GM12878 (cell line): ENCODE measurements at regions of chr3 and their contacts with region 1.

Region 1: GRCh38 chr3:87298111-87298718 is 21.8 kb upstream of the POU1F1 start:
- DNase-seq: no peak
- ATAC-seq: peak; percentile 88
- H3K4me3 ChIP-seq: no peak overlapping the region
- H3K27ac ChIP-seq: no peak overlapping the region
- H3K4me1 ChIP-seq: no peaks in the 10 kb centered on the region
- H3K27me3 ChIP-seq: no peaks in the 10 kb centered on the region
- CTCF ChIP-seq: peak; percentile 52 to 59 (median 58); a peak in 5 of 6 replicates
- EP300 ChIP-seq: no peak
- POLR2A ChIP-seq: no peak
- RAD21 ChIP-seq: peak; percentile 67

Region 2: GRCh38 chr3:87287011-87287410 is 11.2 kb before region 1 on chr3:
- CTCF ChIA-PET with region 1: interaction called, 17 read pairs
- POLR2A ChIA-PET with region 1: no interaction called
- RAD21 ChIA-PET with region 1: no interaction called
- SMC1A ChIA-PET with region 1: interaction called, 4 read pairs
- in situ Hi-C with region 1: no loop called
- intact Hi-C with region 1: no loop called
- DNase-seq: no peak
- ATAC-seq: peak; percentile 51
- H3K4me3 ChIP-seq: no peak overlapping the region
- H3K27ac ChIP-seq: no peak overlapping the region
- H3K4me1 ChIP-seq: no peaks in the 10 kb centered on the region
- H3K27me3 ChIP-seq: no peaks in the 10 kb centered on the region
- CTCF ChIP-seq: no peak
- EP300 ChIP-seq: no peak
- POLR2A ChIP-seq: no peak
- RAD21 ChIP-seq: no peak

Region 3: DNA sequence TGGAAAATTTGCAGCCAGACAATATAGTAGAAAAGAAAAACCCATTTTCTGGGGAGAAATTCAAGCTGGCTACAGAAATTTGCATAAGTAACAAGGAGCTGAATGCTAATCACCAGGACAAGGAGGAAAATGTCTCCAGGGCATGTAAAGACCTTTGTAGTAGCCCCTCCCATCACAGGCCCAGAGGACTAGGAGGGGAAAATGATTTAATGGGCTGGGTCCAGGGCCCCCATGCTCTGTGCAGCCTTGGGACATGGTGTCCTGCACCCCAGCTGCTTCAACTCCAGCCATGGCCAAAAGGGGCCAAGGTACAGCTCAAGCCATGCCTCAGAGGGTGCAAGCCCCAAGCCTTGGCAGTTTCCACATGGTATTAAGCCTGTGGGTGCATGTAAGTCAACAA is 175.7 kb after region 1 on chr3:
- CTCF ChIA-PET with region 1: no interaction called
- POLR2A ChIA-PET with region 1: no interaction called
- RAD21 ChIA-PET with region 1: no interaction called
- SMC1A ChIA-PET with region 1: no interaction called
- in situ Hi-C with region 1: no loop called
- intact Hi-C with region 1: no loop called
- DNase-seq: no peak
- ATAC-seq: no peak
- H3K4me3 ChIP-seq: no peak overlapping the region
- H3K27ac ChIP-seq: no peak overlapping the region
- H3K4me1 ChIP-seq: no peaks in the 10 kb centered on the region
- H3K27me3 ChIP-seq: no peaks in the 10 kb centered on the region
- CTCF ChIP-seq: no peak
- EP300 ChIP-seq: no peak
- POLR2A ChIP-seq: no peak
- RAD21 ChIP-seq: no peak

Region 4: DNA sequence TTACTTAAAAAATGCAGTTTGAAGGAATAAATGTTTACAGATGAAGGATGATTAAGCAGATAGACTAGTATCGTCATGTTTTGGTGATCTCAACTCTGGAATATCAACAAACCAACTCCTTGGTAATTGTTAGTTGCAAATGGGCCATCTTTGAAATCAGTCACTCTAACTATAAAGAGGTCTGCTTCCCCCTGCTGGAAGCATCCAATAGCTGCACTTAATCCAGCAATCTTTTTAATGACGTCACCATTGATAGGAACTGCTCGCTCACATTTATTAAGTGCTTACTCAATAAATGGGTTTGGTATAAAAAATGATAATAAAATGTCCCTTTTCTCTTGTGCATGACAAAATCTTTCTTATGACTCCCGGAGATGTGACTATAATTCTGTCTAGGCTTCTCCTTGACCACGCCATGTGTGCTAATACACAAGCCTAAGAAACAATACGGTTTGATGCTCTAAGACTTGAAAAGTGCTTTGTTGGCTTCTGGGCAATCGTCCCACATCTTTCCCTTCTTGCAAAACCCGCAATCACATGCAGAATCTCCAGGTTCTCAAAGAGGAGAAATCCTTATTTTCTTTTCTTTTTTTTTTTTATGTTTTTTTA is 205.8 kb after region 1 on chr3:
- CTCF ChIA-PET with region 1: interaction called, 8 read pairs
- POLR2A ChIA-PET with region 1: no interaction called
- RAD21 ChIA-PET with region 1: interaction called, 3 read pairs
- SMC1A ChIA-PET with region 1: interaction called, 3 read pairs
- in situ Hi-C with region 1: no loop called
- intact Hi-C with region 1: loop called (anchors 2 kb)
- DNase-seq: no peak
- ATAC-seq: peak; percentile 78
- H3K4me3 ChIP-seq: no peak overlapping the region
- H3K27ac ChIP-seq: no peak overlapping the region
- H3K4me1 ChIP-seq: no peaks in the 10 kb centered on the region
- H3K27me3 ChIP-seq: no peaks in the 10 kb centered on the region
- CTCF ChIP-seq: peak; percentile 48 to 60 (median 54)
- EP300 ChIP-seq: no peak
- POLR2A ChIP-seq: no peak
- RAD21 ChIP-seq: peak; percentile 65